ENCODE measurements at regions of chr17 and their contacts with region 1.

Region 1: GRCh38 chr17:8057691-8058114 is 18.8 kb downstream of the ALOX15B start:
- DNase-seq: peak; percentile 45
- ATAC-seq: peak; percentile 78
- H3K4me3 ChIP-seq: no peak overlapping the region
- H3K27ac ChIP-seq: no peak overlapping the region
- H3K4me1 ChIP-seq: peaks cover 14% of the 10 kb centered on the region
- H3K27me3 ChIP-seq: peaks cover 0 to 4% of the 10 kb centered on the region in 2 experiments; a peak in 1 of 4 replicates
- CTCF ChIP-seq: peak; percentile 69 to 81 (median 74)
- EP300 ChIP-seq: no peak
- POLR2A ChIP-seq: no peak
- RAD21 ChIP-seq: peak; percentile 80

Region 2: GRCh38 chr17:7515911-7516610 is 541.6 kb before region 1 on chr17:
- CTCF ChIA-PET with region 1: no interaction called
- POLR2A ChIA-PET with region 1: no interaction called
- RAD21 ChIA-PET with region 1: no interaction called
- SMC1A ChIA-PET with region 1: no interaction called
- in situ Hi-C with region 1: no loop called
- intact Hi-C with region 1: no loop called
- DNase-seq: no peak
- ATAC-seq: no peak
- H3K4me3 ChIP-seq: no peak overlapping the region
- H3K27ac ChIP-seq: no peak overlapping the region
- H3K4me1 ChIP-seq: no peaks in the 10 kb centered on the region
- H3K27me3 ChIP-seq: no peaks in the 10 kb centered on the region
- CTCF ChIP-seq: no peak
- EP300 ChIP-seq: no peak
- POLR2A ChIP-seq: no peak
- RAD21 ChIP-seq: no peak

Region 3: DNA sequence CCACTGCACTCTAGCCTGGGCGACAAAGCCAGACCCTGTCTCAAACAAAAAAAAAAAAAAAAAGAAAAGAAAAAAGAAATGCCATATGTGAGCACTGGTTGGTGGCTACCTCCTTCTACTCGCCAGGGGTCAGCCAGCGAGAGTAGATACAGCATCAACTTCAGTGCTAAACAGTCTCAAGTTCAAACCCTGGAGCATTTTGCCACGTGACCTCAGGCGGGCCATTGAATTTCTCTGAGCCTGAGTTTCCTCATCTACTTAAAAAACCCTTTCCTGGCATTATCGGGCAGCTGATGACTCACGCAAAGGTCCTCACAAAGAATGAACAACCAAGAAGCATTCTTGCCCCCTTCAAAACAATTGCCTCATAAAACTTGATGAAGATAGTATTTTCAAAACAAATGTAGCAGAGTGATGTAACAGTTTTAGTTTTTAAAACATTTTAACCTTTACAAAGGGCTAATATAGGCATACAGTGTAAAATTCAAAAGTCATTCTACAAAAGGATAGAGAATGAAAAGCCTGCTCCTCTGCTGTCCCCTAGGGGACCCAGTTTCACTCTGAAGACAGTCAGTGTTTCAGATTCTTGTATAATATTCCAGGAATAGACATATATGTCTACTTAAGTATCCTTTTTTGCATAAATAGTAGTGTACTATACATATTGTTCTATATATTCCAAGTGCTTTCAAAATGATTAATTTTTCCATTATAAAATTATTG is 311.8 kb before region 1 on chr17:
- CTCF ChIA-PET with region 1: interaction called, 30 read pairs
- POLR2A ChIA-PET with region 1: no interaction called
- RAD21 ChIA-PET with region 1: interaction called, 13 read pairs
- SMC1A ChIA-PET with region 1: interaction called, 7 read pairs
- in situ Hi-C with region 1: no loop called
- intact Hi-C with region 1: loop called (anchors 5 kb)
- DNase-seq: no peak
- ATAC-seq: no peak
- H3K4me3 ChIP-seq: no peak overlapping the region
- H3K27ac ChIP-seq: no peak overlapping the region
- H3K4me1 ChIP-seq: no peaks in the 10 kb centered on the region
- H3K27me3 ChIP-seq: no peaks in the 10 kb centered on the region; a peak in 3 of 4 replicates
- CTCF ChIP-seq: no peak
- EP300 ChIP-seq: no peak
- POLR2A ChIP-seq: no peak
- RAD21 ChIP-seq: no peak

Region 4: DNA sequence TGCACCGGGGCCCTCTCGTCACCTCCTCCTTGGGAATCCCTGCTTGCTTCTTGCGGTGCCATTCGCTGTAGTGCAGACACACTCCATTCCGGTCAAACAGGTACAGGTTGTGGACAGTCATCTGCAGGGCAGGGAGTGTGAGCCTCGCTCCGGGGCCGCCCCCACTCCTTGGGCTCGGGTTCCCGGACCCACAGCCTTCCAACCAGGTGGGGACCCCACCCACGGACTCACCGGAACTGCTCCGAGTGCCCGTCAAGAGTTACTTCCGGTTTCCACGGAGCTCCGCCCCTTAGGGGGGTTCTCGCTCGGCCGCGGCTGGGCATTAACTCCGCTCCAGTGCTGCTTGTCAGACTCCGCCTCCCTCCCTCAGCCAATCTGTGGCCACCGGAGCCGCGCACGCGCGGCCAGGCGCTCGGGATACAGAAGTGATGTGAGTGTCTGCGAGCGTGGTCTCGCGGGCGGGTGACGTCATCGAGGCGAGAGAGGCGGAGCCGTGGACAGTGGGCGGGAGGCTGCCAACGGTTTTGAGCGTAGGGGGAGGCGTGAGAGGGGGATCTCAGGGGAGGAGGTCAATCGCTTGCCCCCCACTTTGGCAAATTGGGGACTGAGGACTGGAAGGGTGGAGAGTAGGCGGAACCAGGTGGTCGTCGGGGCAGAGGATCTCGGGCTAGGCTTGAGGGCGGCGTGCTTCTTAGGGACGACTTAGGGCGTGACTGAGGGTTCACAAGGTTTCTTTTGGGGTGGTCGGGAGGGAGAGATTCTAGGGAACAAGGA is 125.8 kb before region 1 on chr17 and contains the starts of genes CNTROB and TRAPPC1:
- CTCF ChIA-PET with region 1: interaction called, 10 read pairs
- POLR2A ChIA-PET with region 1: interaction called, 3 read pairs
- RAD21 ChIA-PET with region 1: interaction called, 8 read pairs
- SMC1A ChIA-PET with region 1: interaction called, 4 read pairs
- in situ Hi-C with region 1: no loop called
- intact Hi-C with region 1: no loop called
- DNase-seq: peak; percentile 98
- ATAC-seq: peak; percentile 92
- H3K4me3 ChIP-seq: peak within 1 kb of the TSS; percentile 100
- H3K27ac ChIP-seq: peak within 1 kb of the TSS; percentile 96
- H3K4me1 ChIP-seq: peaks cover 8% of the 10 kb centered on the region
- H3K27me3 ChIP-seq: no peaks in the 10 kb centered on the region
- CTCF ChIP-seq: no peak
- EP300 ChIP-seq: peak in 1 of 2 experiments; percentile 27; a peak in 1 of 4 replicates
- POLR2A ChIP-seq: peak; percentile 92
- RAD21 ChIP-seq: no peak
- polyA plus RNA-seq, gene CNTROB: 2.0 to 4.2 TPM
- polyA plus RNA-seq, gene TRAPPC1: 95.5 to 113 TPM

Region 5: DNA sequence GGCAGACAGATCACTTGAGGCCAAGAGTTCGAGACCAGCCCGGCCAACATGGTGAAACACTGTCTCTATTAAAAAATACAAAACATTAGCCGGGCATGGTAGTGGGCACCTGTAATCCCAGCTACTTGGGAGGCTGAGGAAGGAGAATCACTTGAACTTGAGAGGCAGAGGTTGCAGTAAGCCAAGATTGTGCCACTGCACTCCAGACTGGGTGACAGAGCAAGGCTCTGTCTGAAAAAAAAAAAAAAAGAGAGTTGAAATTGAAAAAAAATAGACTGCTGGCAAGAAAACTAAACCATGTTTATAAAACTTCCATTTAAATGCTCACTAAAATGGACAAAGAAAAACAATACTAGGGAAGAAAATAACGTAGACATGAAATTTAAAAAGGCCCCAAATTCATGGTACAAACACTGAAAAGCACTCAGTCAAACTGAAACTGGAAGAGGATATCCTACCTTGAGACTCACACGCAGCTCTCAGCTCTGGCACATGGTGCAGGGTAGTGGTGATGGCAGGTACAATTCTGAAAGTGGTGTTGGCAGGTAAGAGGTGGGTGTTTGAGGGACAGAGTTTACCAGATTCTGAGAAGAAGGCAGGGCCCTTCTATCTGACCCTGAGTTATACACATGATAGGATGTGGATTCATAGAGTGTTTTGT is 106.4 kb before region 1 on chr17:
- CTCF ChIA-PET with region 1: no interaction called
- POLR2A ChIA-PET with region 1: no interaction called
- RAD21 ChIA-PET with region 1: no interaction called
- SMC1A ChIA-PET with region 1: no interaction called
- in situ Hi-C with region 1: no loop called
- intact Hi-C with region 1: no loop called
- DNase-seq: peak; percentile 45
- ATAC-seq: peak; percentile 99
- H3K4me3 ChIP-seq: no peak overlapping the region
- H3K27ac ChIP-seq: peak overlapping the region; percentile 41
- H3K4me1 ChIP-seq: peaks cover 12% of the 10 kb centered on the region
- H3K27me3 ChIP-seq: no peaks in the 10 kb centered on the region
- CTCF ChIP-seq: no peak
- EP300 ChIP-seq: no peak
- POLR2A ChIP-seq: peak; percentile 49
- RAD21 ChIP-seq: no peak

Region 6: GRCh38 chr17:8016632-8017478 is 40.8 kb before region 1 on chr17:
- CTCF ChIA-PET with region 1: interaction called, 87 read pairs
- POLR2A ChIA-PET with region 1: no interaction called
- RAD21 ChIA-PET with region 1: interaction called, 17 read pairs
- SMC1A ChIA-PET with region 1: interaction called, 30 read pairs
- in situ Hi-C with region 1: no loop called
- intact Hi-C with region 1: loop called (anchors 5 kb)
- DNase-seq: no peak
- ATAC-seq: peak; percentile 87
- H3K4me3 ChIP-seq: no peak overlapping the region
- H3K27ac ChIP-seq: no peak overlapping the region
- H3K4me1 ChIP-seq: no peaks in the 10 kb centered on the region
- H3K27me3 ChIP-seq: peaks cover 0 to 3% of the 10 kb centered on the region in 2 experiments; a peak in 3 of 4 replicates
- CTCF ChIP-seq: peak; percentile 51 to 77 (median 63)
- EP300 ChIP-seq: no peak
- POLR2A ChIP-seq: no peak
- RAD21 ChIP-seq: peak; percentile 46

Region 7: GRCh38 chr17:8079291-8080207 is 21.8 kb after region 1 on chr17:
- CTCF ChIA-PET with region 1: interaction called, 159 read pairs
- POLR2A ChIA-PET with region 1: no interaction called
- RAD21 ChIA-PET with region 1: interaction called, 25 read pairs
- SMC1A ChIA-PET with region 1: interaction called, 37 read pairs
- in situ Hi-C with region 1: no loop called
- intact Hi-C with region 1: no loop called
- DNase-seq: no peak
- ATAC-seq: peak; percentile 96
- H3K4me3 ChIP-seq: peak overlapping the region; percentile 75
- H3K27ac ChIP-seq: no peak overlapping the region
- H3K4me1 ChIP-seq: peaks cover 4% of the 10 kb centered on the region; the same call in 1 of the 2 replicates
- H3K27me3 ChIP-seq: peaks cover 3% of the 10 kb centered on the region in 2 experiments; a peak in 3 of 4 replicates
- CTCF ChIP-seq: peak; percentile 78 to 91 (median 90)
- EP300 ChIP-seq: no peak
- POLR2A ChIP-seq: no peak; the same call in 1 of the 2 replicates
- RAD21 ChIP-seq: peak; percentile 57

Region 8: GRCh38 chr17:8162233-8162996 is 104.7 kb after region 1 on chr17 and contains the start of gene VAMP2:
- CTCF ChIA-PET with region 1: interaction called, 8 read pairs
- POLR2A ChIA-PET with region 1: no interaction called
- RAD21 ChIA-PET with region 1: interaction called, 5 read pairs
- SMC1A ChIA-PET with region 1: interaction called, 3 read pairs
- in situ Hi-C with region 1: no loop called
- intact Hi-C with region 1: loop called (anchors 5 kb)
- DNase-seq: no peak
- ATAC-seq: peak; percentile 69
- H3K4me3 ChIP-seq: peak within 1 kb of the TSS; percentile 95
- H3K27ac ChIP-seq: peak within 1 kb of the TSS; percentile 87
- H3K4me1 ChIP-seq: peaks cover 33% of the 10 kb centered on the region
- H3K27me3 ChIP-seq: no peaks in the 10 kb centered on the region
- CTCF ChIP-seq: no peak
- EP300 ChIP-seq: no peak
- POLR2A ChIP-seq: peak; percentile 93
- RAD21 ChIP-seq: no peak
- polyA plus RNA-seq, gene VAMP2: 3.0 to 6.3 TPM

Region 9: DNA sequence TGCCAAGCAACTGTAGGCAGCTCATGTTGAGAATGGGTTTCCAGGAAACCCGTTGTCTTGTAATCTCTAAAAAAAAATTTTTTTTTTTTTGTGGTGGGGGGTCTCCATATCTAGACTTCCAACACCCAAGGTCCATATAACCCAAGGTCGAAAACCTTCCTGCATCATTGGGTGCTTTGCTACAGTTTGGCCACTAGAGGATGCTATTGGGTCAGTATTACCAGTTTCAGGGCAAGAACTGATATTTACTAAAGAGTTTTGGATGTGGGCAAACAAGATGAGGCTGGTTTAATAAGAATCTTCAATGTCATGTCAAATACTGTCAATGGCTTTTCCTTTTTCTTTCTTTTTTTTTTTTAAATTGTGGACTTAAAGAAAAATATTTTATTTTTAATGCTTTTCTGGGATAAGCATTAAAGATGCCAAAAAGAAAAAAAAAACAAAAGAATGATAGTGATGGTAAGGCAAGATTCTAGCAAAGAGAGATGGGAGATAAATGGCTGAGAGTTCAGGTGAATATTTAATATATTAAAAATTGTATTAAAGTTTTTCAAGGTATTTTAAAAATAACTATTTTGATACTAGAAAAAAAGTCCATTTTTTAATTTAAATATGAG is 1671.4 kb after region 1 on chr17:
- CTCF ChIA-PET with region 1: no interaction called
- POLR2A ChIA-PET with region 1: no interaction called
- RAD21 ChIA-PET with region 1: no interaction called
- SMC1A ChIA-PET with region 1: no interaction called
- in situ Hi-C with region 1: no loop called
- intact Hi-C with region 1: no loop called
- DNase-seq: peak; percentile 8
- ATAC-seq: peak; percentile 50; the same call in 1 of the 3 replicates
- H3K4me3 ChIP-seq: no peak overlapping the region
- H3K27ac ChIP-seq: no peak overlapping the region
- H3K4me1 ChIP-seq: no peaks in the 10 kb centered on the region
- H3K27me3 ChIP-seq: no peaks in the 10 kb centered on the region; a peak in 1 of 4 replicates
- CTCF ChIP-seq: peak; percentile 88 to 100 (median 98)
- EP300 ChIP-seq: no peak
- POLR2A ChIP-seq: no peak
- RAD21 ChIP-seq: peak; percentile 87

Measured in GM12878 (cell line).